ENCODE measurements at regions of chr7 and their contacts with region 1.

Region 1: DNA sequence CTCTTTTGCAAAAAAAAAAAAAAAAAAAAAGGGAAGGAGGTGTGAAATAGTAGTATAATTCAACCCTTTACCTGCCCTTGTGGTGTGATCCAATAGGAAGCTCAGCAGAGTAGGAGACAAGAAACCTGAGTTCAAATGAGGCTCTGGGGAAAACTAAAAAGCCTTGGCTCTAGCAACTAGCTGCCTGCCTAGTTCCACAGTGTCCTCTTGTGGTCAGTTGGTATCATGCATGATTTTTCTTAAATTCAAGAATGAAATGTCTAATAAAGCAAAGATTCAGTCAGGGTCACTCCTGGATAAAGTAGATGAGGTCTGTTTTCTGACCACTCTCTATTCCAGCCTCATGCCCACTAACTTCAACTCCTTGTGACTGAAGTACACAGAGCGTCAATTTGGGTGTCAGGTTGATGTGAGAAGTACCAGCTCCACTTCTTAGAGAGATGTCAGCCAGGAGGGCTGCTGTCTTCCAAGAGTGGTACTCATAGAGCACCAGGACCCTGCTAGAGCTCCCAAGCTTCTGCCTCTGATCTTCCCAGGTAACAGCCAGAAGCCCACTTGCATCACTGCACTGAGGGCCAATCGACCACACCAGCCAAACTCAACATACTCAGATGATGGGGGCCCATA is 10.5 kb downstream of the LSM5 start:
- DNase-seq: peak; percentile 29
- H3K4me3 ChIP-seq: no peak overlapping the region
- H3K27ac ChIP-seq: no peak overlapping the region
- H3K4me1 ChIP-seq: peaks cover 27% of the 10 kb centered on the region
- H3K27me3 ChIP-seq: no peaks in the 10 kb centered on the region
- CTCF ChIP-seq: peak; percentile 99

Region 2: GRCh38 chr7:32266932-32267475 is 212.7 kb before region 1 on chr7:
- CTCF ChIA-PET with region 1: no interaction called
- dilution Hi-C with region 1: no loop called
- in situ Hi-C with region 1: no loop called
- intact Hi-C with region 1: loop called (anchors 2 kb)
- DNase-seq: no peak
- H3K4me3 ChIP-seq: no peak overlapping the region
- H3K27ac ChIP-seq: no peak overlapping the region
- H3K4me1 ChIP-seq: no peaks in the 10 kb centered on the region
- H3K27me3 ChIP-seq: no peaks in the 10 kb centered on the region
- CTCF ChIP-seq: no peak

Region 3: DNA sequence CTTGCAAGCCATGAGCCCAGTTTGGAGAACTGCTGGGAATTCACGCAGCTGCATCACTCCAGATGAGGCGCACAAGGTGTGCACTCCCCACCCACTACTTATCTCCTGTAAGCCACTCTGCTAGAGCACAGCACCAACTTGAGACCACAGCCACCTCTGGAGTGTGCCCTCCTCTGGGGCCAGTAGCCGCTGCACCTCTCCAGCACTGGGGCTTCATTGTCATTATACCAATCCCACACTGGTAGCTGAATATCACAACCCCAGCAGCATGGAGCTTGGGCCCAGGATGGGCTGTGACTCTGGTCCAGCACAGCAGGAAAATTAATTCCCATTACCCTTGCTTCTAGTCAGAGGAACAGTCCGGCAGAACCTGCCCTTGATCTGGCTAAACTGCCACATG is 115.1 kb before region 1 on chr7:
- CTCF ChIA-PET with region 1: no interaction called
- dilution Hi-C with region 1: no loop called
- in situ Hi-C with region 1: loop called in 1 of 2 experiments (anchors 5 kb)
- intact Hi-C with region 1: no loop called
- DNase-seq: no peak
- H3K4me3 ChIP-seq: no peak overlapping the region
- H3K27ac ChIP-seq: no peak overlapping the region
- H3K4me1 ChIP-seq: no peaks in the 10 kb centered on the region
- H3K27me3 ChIP-seq: no peaks in the 10 kb centered on the region
- CTCF ChIP-seq: no peak

Region 4: GRCh38 chr7:32415936-32416335 is 63.8 kb before region 1 on chr7:
- CTCF ChIA-PET with region 1: no interaction called
- dilution Hi-C with region 1: no loop called
- in situ Hi-C with region 1: no loop called
- intact Hi-C with region 1: loop called (anchors 1 kb)
- DNase-seq: peak; percentile 64
- H3K4me3 ChIP-seq: no peak overlapping the region
- H3K27ac ChIP-seq: no peak overlapping the region
- H3K4me1 ChIP-seq: peaks cover 15% of the 10 kb centered on the region
- H3K27me3 ChIP-seq: no peaks in the 10 kb centered on the region
- CTCF ChIP-seq: peak; percentile 23 to 56

Measured in mammary epithelial cell (primary cell).